PC-9 (cell line): ENCODE measurements at regions of chr6 and their contacts with region 1.

Region 1: GRCh38 chr6:22194188-22194921 is 102.5 kb downstream of the PRL start:
- DNase-seq: no peak
- H3K4me3 ChIP-seq: no peak overlapping the region
- H3K27ac ChIP-seq: no peak overlapping the region
- H3K4me1 ChIP-seq: no peaks in the 10 kb centered on the region
- H3K27me3 ChIP-seq: no peaks in the 10 kb centered on the region
- CTCF ChIP-seq: no peak

Region 2: DNA sequence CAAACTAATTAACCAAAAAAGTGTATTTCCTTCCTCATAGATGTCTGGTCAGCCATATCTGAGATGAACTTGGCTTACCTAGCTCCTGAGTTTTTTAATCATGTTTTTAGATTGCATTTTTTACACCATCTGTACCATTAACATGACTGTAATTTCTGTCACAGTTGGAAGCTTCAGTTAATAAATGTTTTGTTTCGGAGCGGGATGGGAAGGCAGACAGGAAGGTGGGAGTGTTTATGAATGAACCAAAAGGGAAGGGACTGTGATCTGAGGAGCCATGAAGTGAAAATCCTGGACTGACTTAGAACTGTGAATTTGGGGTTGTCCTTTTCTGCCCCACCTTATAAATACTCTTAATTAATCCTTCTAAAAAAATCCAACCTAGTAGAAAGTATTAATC is 1046.4 kb before region 1 on chr6:
- CTCF ChIA-PET with region 1: no interaction called
- POLR2A ChIA-PET with region 1: interaction called, 13 read pairs
- intact Hi-C with region 1: no loop called
- DNase-seq: no peak
- H3K4me3 ChIP-seq: no peak overlapping the region
- H3K27ac ChIP-seq: no peak overlapping the region
- H3K4me1 ChIP-seq: no peaks in the 10 kb centered on the region
- H3K27me3 ChIP-seq: no peaks in the 10 kb centered on the region
- CTCF ChIP-seq: no peak

Region 3: DNA sequence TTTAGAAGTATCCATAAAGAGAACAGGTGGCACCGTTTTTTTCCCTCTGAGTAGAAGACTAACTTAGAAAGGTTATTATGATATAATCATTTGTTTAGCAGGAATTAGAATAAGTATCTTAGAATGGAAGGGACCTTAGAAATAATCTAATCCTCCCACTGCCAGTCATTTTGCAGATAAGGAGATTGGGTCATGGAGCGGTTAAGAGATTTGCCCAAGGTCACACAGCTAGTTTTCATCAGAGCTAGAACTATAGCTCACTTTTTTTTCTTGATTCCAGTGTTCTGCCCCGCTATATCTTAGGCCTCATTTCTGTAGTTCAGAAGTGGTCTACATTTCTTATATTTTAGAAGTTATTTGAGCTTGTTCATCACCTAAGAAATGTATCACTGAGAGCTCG is 37.1 kb before region 1 on chr6:
- CTCF ChIA-PET with region 1: no interaction called
- POLR2A ChIA-PET with region 1: interaction called, 17 read pairs
- intact Hi-C with region 1: no loop called
- DNase-seq: no peak
- H3K4me3 ChIP-seq: no peak overlapping the region
- H3K27ac ChIP-seq: no peak overlapping the region
- H3K4me1 ChIP-seq: no peaks in the 10 kb centered on the region
- H3K27me3 ChIP-seq: no peaks in the 10 kb centered on the region
- CTCF ChIP-seq: no peak